ENCODE measurements at regions of chr11 and their contacts with region 1.

Region 1: GRCh38 chr11:105206633-105207032 is 67.1 kb upstream of the CARD18 start:
- DNase-seq: no peak
- H3K4me3 ChIP-seq: no peak overlapping the region
- H3K27ac ChIP-seq: no peak overlapping the region
- H3K4me1 ChIP-seq: no peaks in the 10 kb centered on the region
- H3K27me3 ChIP-seq: no peaks in the 10 kb centered on the region
- CTCF ChIP-seq: no peak
- POLR2A ChIP-seq: no peak

Region 2: DNA sequence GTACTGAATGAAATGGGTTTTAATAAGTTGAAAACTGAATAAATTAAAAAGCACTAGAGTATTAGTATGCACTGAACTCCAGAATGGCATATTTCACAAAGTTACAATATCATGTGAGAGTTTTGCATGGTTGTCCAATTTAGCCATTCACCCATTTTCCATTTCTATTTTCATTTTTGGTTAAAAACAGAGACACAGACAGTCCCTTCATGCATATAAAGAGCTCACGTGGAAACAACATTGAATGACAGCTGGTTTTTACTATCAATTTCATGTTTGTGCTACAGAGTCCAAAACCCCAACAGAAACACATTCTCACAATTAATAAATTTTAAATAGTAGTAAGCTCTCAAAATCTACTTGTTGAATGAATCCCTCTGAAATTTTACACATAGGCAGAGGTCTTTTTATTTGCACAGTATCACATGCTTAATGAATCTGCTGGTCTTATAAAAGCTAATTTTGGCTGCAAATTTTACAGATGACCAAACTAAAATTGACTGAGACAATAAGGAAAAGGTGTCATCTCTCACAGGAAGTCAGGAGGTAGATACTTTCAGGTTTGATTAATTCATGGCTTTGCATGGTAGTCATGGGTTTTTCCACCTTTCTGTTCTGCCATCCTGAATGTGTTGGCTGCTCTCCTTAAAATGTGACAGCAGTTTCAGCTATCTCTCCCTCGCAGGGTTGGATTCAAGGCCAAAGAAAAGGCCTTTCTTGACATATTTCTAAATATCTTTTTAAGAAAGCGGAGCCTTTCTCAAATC is 1190.8 kb before region 1 on chr11:
- intact Hi-C with region 1: loop called (anchors 5 kb)
- DNase-seq: no peak
- H3K4me3 ChIP-seq: no peak overlapping the region
- H3K27ac ChIP-seq: no peak overlapping the region
- H3K4me1 ChIP-seq: no peaks in the 10 kb centered on the region
- H3K27me3 ChIP-seq: no peaks in the 10 kb centered on the region
- CTCF ChIP-seq: no peak
- POLR2A ChIP-seq: no peak

Measured in breast epithelium (tissue), 4 donors.